Gastrocnemius medialis (tissue), 4 donors: ENCODE measurements at regions of chr15 and their contacts with region 1.

Region 1: DNA sequence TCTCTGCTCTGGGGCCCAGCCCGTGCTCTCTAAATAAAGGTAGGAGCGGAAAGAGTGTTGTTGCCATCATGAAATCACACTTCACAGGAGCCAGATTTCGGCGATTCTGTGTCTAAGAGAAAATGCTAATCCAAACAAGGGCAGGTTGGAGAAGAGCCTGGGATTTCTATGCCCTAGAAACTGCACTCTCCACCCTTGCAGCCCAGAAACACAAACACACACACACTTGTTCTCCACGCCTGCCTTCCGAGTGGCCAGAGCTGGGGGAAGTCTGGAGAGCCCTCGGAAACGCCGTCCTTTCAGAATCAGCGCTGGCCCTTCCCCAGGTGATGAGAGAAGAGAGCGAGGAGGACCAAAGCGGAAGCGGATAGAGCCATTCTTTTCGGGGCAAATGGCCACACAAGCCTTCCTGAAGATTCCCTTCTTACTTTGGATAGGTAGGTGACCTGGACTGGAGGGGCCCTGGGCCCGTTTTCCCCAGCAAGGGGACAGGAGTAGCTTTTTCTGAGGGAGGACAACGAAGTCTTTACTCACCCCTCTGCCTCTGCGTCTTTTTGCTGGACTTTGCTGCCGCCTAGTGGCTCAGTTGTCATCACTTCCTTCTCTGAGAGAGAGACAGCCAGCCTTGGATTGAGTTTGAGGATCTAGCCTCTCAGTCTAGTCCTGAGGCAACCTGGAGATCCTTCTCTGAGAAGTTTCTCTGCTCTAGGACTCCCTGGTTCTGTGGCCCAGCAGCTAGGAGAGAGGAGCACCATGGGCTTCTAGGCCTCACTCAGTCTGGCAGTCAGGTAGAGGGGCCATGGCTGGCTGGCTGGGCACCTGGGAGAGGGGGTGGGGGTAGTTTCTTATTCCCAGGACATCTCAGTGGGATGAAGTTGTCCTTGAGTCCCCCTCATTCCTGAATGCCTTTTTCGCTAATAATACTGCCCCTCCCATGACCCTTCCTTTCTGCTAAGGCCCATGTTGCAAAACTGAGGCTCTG is 37.7 kb downstream of the SENP8 start:
- DNase-seq: peak; percentile 65 to 74
- ATAC-seq: peak; percentile 95 to 98
- H3K4me3 ChIP-seq: peak overlapping the region; percentile 59 to 81 (median 62)
- H3K27ac ChIP-seq: peak overlapping the region; percentile 39 to 67 (median 58)
- H3K4me1 ChIP-seq: peaks cover 0 to 10% of the 10 kb centered on the region in 2 donors
- H3K27me3 ChIP-seq: no peaks in the 10 kb centered on the region
- CTCF ChIP-seq: peak; percentile 81 to 88 (median 85)
- POLR2A ChIP-seq: no peak

Region 2: DNA sequence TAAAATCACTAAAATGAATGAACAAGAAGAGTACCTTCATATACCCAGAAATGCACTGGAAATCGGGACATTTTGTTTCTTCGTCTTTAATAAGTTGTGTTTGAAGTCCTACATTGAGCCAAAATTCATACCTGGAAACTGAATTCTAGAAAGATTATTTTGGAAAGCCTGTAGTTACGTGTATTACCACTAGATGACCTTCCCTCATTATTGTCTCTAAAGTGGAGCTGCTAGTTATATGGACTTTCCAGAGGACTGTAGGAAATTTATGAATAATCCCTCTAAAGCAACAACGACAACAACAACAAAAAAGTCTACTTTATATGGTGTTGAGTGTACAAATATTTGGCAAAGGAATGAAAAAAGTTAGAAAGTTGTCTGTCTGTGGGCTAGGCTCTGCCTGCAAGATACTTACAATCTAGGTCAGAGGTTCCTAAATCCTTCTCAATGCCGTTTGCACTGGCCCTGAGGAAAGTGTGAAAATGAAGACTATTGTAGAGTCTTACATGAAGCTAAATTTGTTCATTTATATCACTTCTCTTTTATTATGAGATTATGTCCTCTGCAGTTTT is 580.4 kb before region 1 on chr15:
- in situ Hi-C with region 1: loop called in 1 of 4 experiments (anchors 25 kb)
- intact Hi-C with region 1: no loop called
- DNase-seq: no peak
- ATAC-seq: no peak
- H3K4me3 ChIP-seq: no peak overlapping the region
- H3K27ac ChIP-seq: no peak overlapping the region
- H3K4me1 ChIP-seq: peaks cover 14% of the 10 kb centered on the region in 2 donors
- H3K27me3 ChIP-seq: no peaks in the 10 kb centered on the region
- CTCF ChIP-seq: peak; percentile 27 to 46 (median 39)
- POLR2A ChIP-seq: no peak

Region 3: GRCh38 chr15:71752604-71753289 is 403.2 kb before region 1 on chr15:
- in situ Hi-C with region 1: loop called in 3 of 4 experiments (anchors 10 to 25 kb)
- intact Hi-C with region 1: no loop called
- DNase-seq: no peak
- ATAC-seq: peak; percentile 58 to 75
- H3K4me3 ChIP-seq: no peak overlapping the region
- H3K27ac ChIP-seq: no peak overlapping the region
- H3K4me1 ChIP-seq: peaks cover 7 to 13% of the 10 kb centered on the region in 2 donors
- H3K27me3 ChIP-seq: no peaks in the 10 kb centered on the region
- CTCF ChIP-seq: peak in 2 of 5 experiments; percentile 27 to 34
- POLR2A ChIP-seq: no peak

Region 4: DNA sequence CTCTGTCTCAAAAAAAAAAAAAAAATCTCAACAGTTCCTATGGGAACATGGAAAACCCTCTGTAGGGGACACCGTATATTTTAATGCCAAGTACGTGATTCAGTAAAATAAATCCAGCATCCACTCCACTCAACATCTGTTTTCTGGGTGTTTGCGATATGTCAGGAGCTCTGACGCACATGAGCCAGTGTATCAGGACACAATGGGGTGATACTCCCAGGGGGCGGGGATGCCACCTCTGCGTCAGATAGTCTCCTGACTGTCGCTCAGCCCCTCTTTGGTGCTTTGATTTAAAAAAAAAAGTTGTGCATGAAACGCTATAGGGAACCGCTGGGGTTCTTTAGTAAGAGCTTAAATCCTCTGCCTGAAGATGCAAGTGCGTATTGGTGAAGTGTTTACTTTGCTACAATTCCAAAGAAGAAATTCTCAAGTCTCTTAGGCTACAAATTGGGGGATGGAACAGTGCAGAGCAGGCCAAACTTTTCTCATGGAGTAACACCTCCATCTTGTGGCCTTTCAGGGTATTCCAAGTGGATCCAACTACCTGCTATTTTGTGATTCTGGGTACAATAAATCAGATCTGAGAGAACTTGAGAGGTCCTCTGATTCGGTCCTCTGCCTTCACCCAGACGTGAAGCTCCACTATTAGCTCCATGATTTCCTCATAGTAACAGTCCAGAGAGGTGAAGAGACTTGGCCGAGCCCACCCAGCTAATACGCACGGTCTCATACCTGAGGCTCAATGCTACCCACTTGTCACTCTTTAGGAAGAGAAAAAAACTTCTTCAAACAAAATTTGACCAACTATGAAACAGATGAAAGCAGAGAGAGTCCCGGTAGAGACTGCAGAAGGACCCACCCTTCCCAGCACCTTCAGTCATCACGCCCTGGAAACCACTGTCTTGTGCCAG is 354.8 kb before region 1 on chr15:
- in situ Hi-C with region 1: no loop called
- intact Hi-C with region 1: loop called (anchors 5 kb)
- DNase-seq: no peak
- ATAC-seq: peak; percentile 56 to 63
- H3K4me3 ChIP-seq: no peak overlapping the region
- H3K27ac ChIP-seq: no peak overlapping the region
- H3K4me1 ChIP-seq: no peaks in the 10 kb centered on the region
- H3K27me3 ChIP-seq: no peaks in the 10 kb centered on the region
- CTCF ChIP-seq: peak; percentile 64 to 87 (median 79)
- POLR2A ChIP-seq: no peak

Region 5: DNA sequence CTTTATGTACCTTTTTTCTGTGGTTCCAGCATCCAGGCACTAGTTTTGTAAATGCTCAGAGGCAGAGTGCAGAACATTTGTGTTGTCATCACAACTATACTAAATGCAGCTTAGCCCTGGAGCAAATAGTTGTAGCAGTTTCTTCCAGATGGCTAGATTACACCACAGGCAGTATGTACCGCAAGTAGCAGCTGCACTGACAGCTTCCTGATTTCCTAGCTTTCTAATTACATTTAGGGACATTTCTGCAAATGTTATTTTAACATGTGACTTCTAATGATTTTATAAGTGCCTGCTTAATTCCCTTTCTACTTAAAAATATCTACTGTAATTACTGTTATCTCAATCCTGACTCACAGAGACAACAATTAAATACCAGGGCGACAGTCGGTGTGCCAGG is 239.1 kb before region 1 on chr15:
- in situ Hi-C with region 1: loop called in 1 of 4 experiments (anchors 25 kb)
- intact Hi-C with region 1: no loop called
- DNase-seq: no peak
- ATAC-seq: no peak
- H3K4me3 ChIP-seq: no peak overlapping the region
- H3K27ac ChIP-seq: no peak overlapping the region
- H3K4me1 ChIP-seq: no peaks in the 10 kb centered on the region
- H3K27me3 ChIP-seq: no peaks in the 10 kb centered on the region
- CTCF ChIP-seq: no peak
- POLR2A ChIP-seq: no peak

Region 6: DNA sequence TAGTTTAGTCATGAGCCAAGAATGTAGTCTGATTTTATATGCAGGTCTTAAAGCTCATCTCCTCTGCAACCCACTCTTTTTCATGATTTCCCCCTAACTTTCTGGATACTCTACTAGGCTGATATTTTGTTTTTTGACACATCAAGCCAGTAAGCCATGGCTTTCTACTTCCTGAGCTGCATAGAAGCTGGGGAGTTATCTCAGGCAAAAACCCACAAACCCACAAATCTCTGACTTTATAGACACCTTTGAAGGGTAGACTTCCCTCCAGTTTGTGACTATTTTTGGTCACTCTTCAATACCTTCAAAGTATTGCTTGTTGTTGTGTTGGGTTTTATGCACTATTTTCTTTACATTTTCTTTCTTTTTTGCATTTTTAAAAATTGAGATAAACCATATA is 270.8 kb after region 1 on chr15:
- in situ Hi-C with region 1: no loop called
- intact Hi-C with region 1: no loop called
- DNase-seq: no peak
- ATAC-seq: no peak
- H3K4me3 ChIP-seq: no peak overlapping the region
- H3K27ac ChIP-seq: no peak overlapping the region
- H3K4me1 ChIP-seq: no peaks in the 10 kb centered on the region
- H3K27me3 ChIP-seq: no peaks in the 10 kb centered on the region
- CTCF ChIP-seq: no peak
- POLR2A ChIP-seq: no peak